K562 (cell line): ENCODE measurements at regions of chr11 and their contacts with region 1.

Region 1: DNA sequence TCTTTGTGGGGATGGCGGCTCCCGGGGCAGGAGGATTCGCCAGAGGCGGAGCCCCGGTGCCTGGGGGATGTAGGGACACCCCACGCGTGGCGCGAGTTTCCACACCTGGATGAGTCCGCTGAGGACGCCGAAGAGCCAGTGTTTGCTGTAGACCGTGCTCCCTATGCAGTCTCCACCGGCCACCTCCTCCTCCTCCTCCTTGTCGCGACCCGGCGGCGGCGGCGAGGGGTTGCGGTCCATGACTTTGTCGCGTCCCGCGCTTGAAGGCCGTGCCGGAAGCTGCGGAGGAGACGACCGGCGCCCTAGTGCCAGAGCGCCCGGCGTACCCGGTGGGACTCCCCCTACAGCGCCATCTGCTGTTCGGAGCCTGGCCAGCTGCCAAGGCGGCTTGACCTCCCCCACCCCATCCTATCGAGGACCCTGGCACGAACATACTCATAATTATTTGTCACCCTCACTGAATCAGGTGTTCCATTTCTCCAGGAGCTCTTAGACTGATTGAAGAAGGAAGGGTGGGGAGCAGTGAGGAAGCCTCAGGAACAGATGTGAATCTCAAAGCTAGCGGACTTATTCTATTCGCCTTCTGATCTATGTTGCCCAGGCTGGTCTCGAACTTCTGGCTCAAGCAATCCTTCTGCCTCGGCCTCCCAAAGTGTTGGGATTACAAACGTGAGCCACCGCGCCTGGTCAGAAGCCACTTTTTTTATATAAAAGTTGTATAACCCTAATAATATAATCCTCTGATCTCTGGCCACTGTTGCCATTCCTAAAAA is at the start of gene SAAL1:
- DNase-seq: peak; percentile 91 to 94 (median 92)
- ATAC-seq: peak; percentile 99
- H3K4me3 ChIP-seq: peak within 1 kb of the TSS; percentile 91
- H3K27ac ChIP-seq: peak within 1 kb of the TSS; percentile 67
- H3K4me1 ChIP-seq: peaks cover 0 to 5% of the 10 kb centered on the region in 2 experiments; a peak in 3 of 5 replicates
- H3K27me3 ChIP-seq: peaks cover 0 to 2% of the 10 kb centered on the region in 2 experiments; a peak in 1 of 5 replicates
- CTCF ChIP-seq: peak; percentile 88 to 94 (median 89)
- EP300 ChIP-seq: peak; percentile 47
- POLR2A ChIP-seq: peak; percentile 90
- RAD21 ChIP-seq: peak in 1 of 2 experiments; percentile 35; a peak in 2 of 4 replicates
- polyA plus RNA-seq, gene SAAL1: 42.3 to 42.6 TPM

Region 2: DNA sequence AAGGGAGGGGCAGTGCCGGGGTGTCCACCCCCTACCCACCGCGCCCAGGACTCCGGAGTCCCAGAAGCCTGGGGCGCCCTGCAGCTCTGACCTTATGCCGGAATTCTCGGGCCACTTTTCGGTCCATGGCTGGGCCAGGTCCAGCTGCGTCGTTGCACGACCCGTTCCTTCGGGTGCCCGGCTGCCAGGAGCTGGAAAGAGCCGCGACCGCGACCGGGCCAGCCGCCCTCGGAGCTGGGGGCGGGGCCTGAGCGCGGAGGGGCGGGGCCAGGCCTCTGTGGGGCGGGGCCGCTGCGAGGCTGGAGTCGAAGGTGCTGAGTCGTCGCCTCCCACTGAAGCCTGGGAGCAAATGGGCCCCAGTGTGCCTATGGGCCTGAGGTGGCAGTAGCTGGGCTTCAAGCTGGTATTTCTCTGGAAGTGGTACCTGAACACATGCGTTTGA is 561.8 kb before region 1 on chr11 and contains the start of gene USH1C:
- CTCF ChIA-PET with region 1: no interaction called
- POLR2A ChIA-PET with region 1: no interaction called
- in situ Hi-C with region 1: no loop called
- intact Hi-C with region 1: no loop called
- DNase-seq: peak; percentile 63 to 97 (median 95)
- ATAC-seq: peak; percentile 98
- H3K4me3 ChIP-seq: peak within 1 kb of the TSS; percentile 25
- H3K27ac ChIP-seq: no peak within 1 kb of the TSS; the same call in 2 of the 3 replicates
- H3K4me1 ChIP-seq: peaks cover 0 to 22% of the 10 kb centered on the region in 2 experiments; a peak in 2 of 5 replicates
- H3K27me3 ChIP-seq: peaks cover 10 to 51% of the 10 kb centered on the region in 2 experiments; a peak in 3 of 5 replicates
- CTCF ChIP-seq: no peak
- EP300 ChIP-seq: no peak
- POLR2A ChIP-seq: no peak
- RAD21 ChIP-seq: no peak
- polyA plus RNA-seq, gene USH1C: not detected

Region 3: GRCh38 chr11:17991783-17992433 is 114.1 kb before region 1 on chr11:
- CTCF ChIA-PET with region 1: interaction called, 5 read pairs
- POLR2A ChIA-PET with region 1: no interaction called
- in situ Hi-C with region 1: no loop called
- intact Hi-C with region 1: loop called (anchors 2 kb)
- DNase-seq: peak; percentile 56 to 66 (median 62)
- ATAC-seq: peak; percentile 88
- H3K4me3 ChIP-seq: no peak overlapping the region
- H3K27ac ChIP-seq: no peak overlapping the region
- H3K4me1 ChIP-seq: no peaks in the 10 kb centered on the region
- H3K27me3 ChIP-seq: no peaks in the 10 kb centered on the region
- CTCF ChIP-seq: peak; percentile 64 to 88 (median 75)
- EP300 ChIP-seq: no peak
- POLR2A ChIP-seq: no peak
- RAD21 ChIP-seq: peak; percentile 60 to 77

Region 4: DNA sequence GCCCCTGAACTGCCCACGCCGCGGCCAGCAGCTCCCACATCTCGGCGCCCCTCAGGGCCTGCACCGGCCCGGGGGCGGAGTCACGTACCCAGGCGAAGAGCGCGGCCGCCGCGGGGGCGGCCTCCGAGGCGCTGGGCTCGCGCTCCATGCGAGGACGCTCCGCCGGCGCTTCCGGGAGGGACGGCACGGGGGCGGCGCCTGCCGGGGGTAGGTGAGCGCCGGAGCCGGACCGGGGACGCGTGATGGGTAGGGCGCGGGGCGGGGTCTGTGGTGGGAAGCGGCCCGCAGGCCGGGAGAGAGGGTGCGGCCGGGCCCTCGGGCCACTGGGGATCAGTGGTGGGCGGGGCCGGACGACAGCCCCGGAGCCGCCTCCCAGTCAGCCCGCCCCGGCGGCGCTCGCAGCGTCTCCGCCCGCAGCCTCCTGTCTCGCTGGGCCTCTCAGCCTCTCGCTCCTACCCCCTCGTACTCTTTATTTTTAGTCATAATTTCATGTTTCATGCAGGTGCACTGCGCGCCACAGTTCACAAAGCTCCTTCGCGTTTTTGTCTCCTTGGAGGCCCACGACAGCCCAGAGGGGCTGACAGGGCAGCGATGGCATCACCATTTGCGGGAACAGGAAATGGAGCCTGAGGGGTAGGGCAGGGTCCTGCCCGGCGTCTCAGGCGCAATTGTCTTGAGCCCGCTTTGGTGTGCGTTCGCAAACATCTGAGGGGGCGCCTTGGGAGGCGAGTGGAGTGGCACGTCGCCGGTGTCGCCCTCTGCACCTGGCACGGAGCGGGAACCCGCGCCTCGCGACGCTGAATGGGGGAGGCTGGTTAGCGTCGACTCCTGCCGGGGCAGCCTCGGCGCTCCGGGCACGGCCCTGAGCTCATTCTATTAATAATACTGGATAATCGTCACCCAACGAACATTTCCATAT is 92.9 kb before region 1 on chr11 and contains the start of gene SERGEF:
- CTCF ChIA-PET with region 1: no interaction called
- POLR2A ChIA-PET with region 1: no interaction called
- in situ Hi-C with region 1: no loop called
- intact Hi-C with region 1: loop called (anchors 5 kb)
- DNase-seq: peak; percentile 95 to 98 (median 96)
- ATAC-seq: peak; percentile 96
- H3K4me3 ChIP-seq: peak within 1 kb of the TSS; percentile 63
- H3K27ac ChIP-seq: peak within 1 kb of the TSS; percentile 59
- H3K4me1 ChIP-seq: peaks cover 13 to 28% of the 10 kb centered on the region in 2 experiments; a peak in 4 of 5 replicates
- H3K27me3 ChIP-seq: peaks cover 0 to 7% of the 10 kb centered on the region in 2 experiments; a peak in 3 of 5 replicates
- CTCF ChIP-seq: peak in 1 of 3 experiments; percentile 20; a peak in 1 of 6 replicates
- EP300 ChIP-seq: no peak
- POLR2A ChIP-seq: peak; percentile 73
- RAD21 ChIP-seq: 0 out of 4 replicates have a peak, but pooled peaks of 1 of the 2 experiments have one; percentile 3
- polyA plus RNA-seq, gene SERGEF: 10.2 to 20.4 TPM